PC-3 (cell line): ENCODE measurements at regions of chr2 and their contacts with region 1.

Region 1: GRCh38 chr2:238790833-238791230 is 57.1 kb upstream of the TWIST2 start:
- DNase-seq: no peak
- ATAC-seq: no peak
- H3K4me3 ChIP-seq: no peak overlapping the region
- H3K27ac ChIP-seq: no peak overlapping the region
- H3K4me1 ChIP-seq: no peaks in the 10 kb centered on the region
- H3K27me3 ChIP-seq: no peaks in the 10 kb centered on the region
- CTCF ChIP-seq: no peak

Region 2: GRCh38 chr2:238875101-238875470 is 84.3 kb after region 1 on chr2:
- CTCF ChIA-PET with region 1: no interaction called
- POLR2A ChIA-PET with region 1: no interaction called
- intact Hi-C with region 1: loop called (anchors 2 kb)
- DNase-seq: no peak
- ATAC-seq: no peak
- H3K4me3 ChIP-seq: no peak overlapping the region
- H3K27ac ChIP-seq: no peak overlapping the region
- H3K4me1 ChIP-seq: no peaks in the 10 kb centered on the region
- H3K27me3 ChIP-seq: no peaks in the 10 kb centered on the region
- CTCF ChIP-seq: no peak

Region 3: DNA sequence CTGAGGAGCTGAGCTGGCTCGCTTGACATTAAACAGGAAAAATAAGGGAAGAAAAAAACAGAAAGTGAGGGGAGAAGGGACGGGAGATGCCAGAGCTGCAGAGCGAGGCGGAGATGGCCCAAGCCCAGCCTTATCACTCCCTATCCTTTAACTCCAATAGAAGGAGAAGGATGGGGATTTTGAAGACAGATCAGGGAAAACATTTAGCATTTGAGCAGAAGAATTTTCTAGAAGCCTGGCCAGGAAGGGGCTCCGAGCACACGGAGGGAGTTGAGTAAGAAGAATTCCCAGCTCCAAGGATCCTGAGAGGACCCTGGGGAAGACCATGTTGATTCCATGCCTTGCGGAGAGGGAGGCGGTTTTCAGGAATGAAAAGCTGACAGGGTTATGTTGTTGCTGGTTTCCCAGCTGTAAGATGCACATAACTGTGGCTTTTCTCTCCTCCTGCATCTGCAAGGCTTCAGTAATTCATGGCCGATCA is 92.6 kb after region 1 on chr2:
- CTCF ChIA-PET with region 1: interaction called, 10 read pairs
- POLR2A ChIA-PET with region 1: no interaction called
- intact Hi-C with region 1: no loop called
- DNase-seq: no peak
- ATAC-seq: no peak
- H3K4me3 ChIP-seq: no peak overlapping the region
- H3K27ac ChIP-seq: no peak overlapping the region
- H3K4me1 ChIP-seq: peaks cover 8% of the 10 kb centered on the region
- H3K27me3 ChIP-seq: no peaks in the 10 kb centered on the region
- CTCF ChIP-seq: no peak